AG04449 (cell line): ENCODE measurements at regions of chr11 and their contacts with region 1.

Region 1: DNA sequence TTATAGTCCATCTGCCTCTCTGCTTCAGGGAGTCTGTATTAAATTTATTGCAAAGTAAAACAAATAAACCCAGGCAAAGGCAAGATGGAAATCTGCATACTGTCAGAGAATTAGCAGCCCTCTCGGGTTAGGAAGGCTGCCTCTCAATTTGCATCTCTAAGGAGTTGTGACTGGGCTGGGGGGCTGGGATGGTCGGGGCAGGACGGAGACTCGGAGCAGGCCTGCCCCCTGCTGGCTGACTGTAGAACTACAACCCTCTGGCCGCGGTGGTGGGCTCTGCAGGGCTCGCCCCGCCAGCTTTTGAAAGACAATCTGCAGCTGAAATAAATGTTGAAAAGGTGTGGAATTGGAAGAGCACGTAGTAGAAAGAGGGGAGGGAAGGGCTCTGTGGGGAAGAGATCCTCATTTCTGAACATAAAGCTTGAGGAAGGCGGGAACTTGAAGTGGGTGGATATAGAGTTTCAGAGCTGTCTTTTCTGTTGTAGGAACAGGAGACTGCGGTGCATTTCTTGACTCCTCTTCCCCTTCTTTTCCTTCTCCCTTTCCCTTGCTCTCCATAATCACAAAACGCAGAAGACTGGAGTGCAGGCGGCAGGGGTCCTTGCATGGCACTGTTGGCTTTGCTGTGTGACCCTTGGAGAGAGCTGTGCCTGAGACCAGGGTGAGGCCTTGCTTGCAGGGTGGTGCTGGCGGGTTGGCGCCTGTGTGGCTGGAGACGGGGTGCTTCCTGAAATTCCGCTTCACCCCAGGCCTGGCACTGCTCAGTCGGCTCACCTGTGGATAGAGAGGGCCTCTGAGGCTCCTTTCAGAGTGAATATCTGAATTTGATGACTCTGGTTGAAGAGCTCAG is 22.6 kb upstream of the PKNOX2 start:
- DNase-seq: no peak
- H3K4me3 ChIP-seq: no peak overlapping the region
- CTCF ChIP-seq: peak; percentile 92

Region 2: GRCh38 chr11:124961972-124962609 is 179.8 kb before region 1 on chr11:
- CTCF ChIA-PET with region 1: interaction called, 43 read pairs
- POLR2A ChIA-PET with region 1: no interaction called
- DNase-seq: peak; percentile 33
- H3K4me3 ChIP-seq: no peak overlapping the region
- CTCF ChIP-seq: peak; percentile 51

Region 3: DNA sequence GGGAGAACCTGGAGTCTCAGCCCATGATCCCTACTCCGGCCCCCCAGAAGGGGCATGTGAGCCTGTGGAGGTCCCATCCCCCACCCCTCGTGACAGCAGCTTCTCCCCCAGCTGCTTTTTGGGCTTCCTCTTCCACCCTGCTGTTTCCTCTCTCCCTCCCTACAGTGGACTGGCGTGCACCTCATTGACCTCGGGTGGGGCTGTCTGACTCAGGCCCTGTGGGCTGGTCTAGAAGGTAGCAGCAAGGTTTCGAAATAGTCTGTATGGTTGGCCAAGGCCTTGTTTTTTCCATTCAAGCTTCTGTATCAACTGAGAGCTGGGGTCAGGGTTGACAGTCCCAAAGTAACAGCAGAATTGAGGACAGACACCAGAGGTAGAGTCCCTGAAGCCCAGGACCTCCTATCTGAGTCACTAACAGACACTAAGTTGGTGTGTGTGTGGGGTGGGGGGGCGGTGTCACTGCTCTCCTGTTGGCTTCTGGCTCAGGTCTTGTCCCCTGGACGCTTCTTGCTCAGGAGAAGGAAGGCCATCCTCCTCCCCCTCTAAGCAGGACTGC is 71.1 kb before region 1 on chr11:
- CTCF ChIA-PET with region 1: interaction called, 13 read pairs
- POLR2A ChIA-PET with region 1: no interaction called
- DNase-seq: no peak
- H3K4me3 ChIP-seq: no peak overlapping the region
- CTCF ChIP-seq: no peak

Region 4: DNA sequence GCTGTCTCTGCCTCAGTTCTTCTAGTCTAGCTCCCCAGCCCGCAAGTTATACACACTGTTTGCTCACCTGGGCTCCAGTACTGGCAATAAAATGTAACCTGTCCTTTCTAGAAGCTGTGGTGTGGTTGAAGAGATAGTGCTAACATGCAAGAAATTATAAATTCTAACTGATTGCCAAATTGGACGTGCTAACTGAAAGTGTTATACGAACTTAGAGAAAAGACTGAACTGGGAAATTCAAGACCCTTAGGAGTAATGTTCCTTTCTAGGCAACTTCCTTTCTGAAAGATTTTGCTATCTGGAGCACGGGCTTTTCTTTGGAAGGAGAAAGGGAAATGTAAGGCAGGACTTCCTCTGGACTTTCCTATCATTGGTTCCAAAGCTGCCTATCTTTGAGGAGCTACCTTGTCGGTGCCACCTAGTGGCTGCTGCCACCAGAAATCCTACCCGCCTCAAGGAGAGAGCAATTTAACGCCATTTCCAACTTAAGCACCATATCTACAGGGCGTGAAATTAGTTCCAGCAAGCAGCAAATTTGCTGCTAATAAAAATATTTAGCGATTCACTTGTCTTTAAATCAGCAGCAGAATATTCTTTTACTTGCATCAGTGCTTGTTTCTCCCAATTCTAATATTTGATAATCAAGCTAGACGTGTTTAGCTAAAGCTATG is 17.8 kb before region 1 on chr11:
- CTCF ChIA-PET with region 1: interaction called, 36 read pairs
- POLR2A ChIA-PET with region 1: no interaction called
- DNase-seq: no peak
- H3K4me3 ChIP-seq: no peak overlapping the region
- CTCF ChIP-seq: peak; percentile 41

Region 5: GRCh38 chr11:125245299-125245698 is 103.4 kb after region 1 on chr11:
- CTCF ChIA-PET with region 1: no interaction called
- POLR2A ChIA-PET with region 1: no interaction called
- DNase-seq: no peak
- H3K4me3 ChIP-seq: no peak overlapping the region
- CTCF ChIP-seq: no peak

Region 6: DNA sequence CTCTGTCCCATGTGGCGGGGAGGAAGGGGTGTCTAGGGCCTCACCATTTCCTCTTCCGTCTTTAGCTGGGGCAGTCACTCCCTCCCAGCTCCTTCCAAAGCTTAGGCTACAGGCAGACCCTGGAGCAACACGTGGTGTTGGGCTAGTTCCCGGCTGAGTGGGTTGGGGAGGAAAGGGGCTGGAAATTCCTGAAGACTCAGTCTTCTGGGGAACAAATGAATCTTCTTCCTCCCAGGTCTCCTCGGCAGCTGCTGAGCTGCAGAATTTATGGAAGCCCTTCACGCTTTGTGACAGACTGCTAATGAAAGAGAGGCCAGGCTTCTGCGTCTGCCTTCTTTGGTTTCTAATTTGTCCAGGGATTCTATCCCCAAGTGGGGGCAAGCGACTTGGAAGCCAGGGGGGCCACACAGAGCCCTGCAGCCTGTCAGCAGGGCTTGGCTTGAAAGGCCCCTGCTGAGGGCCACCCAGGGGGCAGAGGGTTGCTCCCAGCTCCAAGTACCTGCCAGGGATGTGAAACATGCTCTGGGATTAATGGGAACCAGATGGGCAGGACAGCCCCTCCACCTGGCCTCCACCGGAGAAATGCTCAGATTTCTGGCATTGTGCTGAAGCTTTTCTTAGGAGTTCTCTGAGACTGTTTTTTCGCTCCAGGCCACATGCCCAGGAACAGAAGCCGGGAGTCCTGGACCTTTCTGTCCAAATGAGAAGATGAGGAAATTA is 145.7 kb after region 1 on chr11:
- CTCF ChIA-PET with region 1: no interaction called
- POLR2A ChIA-PET with region 1: no interaction called
- DNase-seq: no peak
- H3K4me3 ChIP-seq: no peak overlapping the region
- CTCF ChIP-seq: no peak

Region 7: DNA sequence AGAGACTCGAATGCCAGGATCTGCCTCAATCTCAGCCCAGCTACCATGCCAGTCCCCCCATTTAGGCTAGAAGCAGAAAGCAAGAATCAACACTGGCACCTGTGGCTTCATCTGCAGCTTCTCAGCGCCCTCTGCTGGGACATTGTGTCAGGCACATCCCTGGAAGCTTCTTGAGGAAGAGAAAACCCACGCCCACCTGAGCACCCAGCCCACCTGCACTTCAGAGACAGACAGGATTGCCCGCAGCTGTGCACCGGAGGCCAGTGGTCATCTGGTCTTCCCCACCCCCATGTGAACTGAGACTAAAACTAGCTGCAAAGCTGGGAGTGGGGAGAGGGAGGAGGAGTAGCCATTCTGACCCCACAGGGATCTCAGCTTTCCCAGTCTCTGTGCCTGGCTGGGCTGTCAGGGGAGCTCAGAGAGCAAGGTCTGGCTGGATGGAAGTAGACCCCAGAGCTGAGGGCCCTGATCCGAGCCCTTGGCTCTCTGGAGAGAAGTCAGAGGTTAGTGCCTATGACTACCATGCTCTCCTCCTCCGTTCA is 287.3 kb after region 1 on chr11:
- CTCF ChIA-PET with region 1: interaction called, 28 read pairs
- POLR2A ChIA-PET with region 1: no interaction called
- DNase-seq: no peak
- H3K4me3 ChIP-seq: no peak overlapping the region
- CTCF ChIP-seq: peak; percentile 85

Region 8: DNA sequence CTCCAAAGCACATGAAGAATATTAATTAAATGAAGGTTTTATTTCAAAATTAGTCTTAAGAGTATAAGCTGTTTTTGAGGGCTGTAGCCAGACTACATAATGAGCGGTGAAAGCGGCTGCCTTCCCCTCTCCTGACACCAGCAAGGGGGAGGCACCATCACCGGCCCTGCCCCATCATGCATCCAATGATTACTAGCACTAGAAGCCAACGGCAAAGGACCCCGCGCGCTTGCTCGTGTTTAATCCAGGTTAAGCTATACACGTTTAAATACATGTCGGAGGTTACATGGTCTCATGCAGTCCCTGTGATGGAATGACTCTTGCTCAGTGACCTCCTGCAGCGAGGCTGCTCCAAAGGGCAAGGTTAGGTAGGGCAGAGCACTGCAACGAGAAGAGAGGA is 303.8 kb after region 1 on chr11:
- CTCF ChIA-PET with region 1: no interaction called
- POLR2A ChIA-PET with region 1: no interaction called
- DNase-seq: no peak
- H3K4me3 ChIP-seq: no peak overlapping the region
- CTCF ChIP-seq: no peak